ENCODE measurements at regions of chr20 and their contacts with region 1.

Region 1: GRCh38 chr20:41411391-41411847 is 44.8 kb upstream of the EMILIN3 start:
- DNase-seq: no peak
- ATAC-seq: peak; percentile 56 to 76

Region 2: DNA sequence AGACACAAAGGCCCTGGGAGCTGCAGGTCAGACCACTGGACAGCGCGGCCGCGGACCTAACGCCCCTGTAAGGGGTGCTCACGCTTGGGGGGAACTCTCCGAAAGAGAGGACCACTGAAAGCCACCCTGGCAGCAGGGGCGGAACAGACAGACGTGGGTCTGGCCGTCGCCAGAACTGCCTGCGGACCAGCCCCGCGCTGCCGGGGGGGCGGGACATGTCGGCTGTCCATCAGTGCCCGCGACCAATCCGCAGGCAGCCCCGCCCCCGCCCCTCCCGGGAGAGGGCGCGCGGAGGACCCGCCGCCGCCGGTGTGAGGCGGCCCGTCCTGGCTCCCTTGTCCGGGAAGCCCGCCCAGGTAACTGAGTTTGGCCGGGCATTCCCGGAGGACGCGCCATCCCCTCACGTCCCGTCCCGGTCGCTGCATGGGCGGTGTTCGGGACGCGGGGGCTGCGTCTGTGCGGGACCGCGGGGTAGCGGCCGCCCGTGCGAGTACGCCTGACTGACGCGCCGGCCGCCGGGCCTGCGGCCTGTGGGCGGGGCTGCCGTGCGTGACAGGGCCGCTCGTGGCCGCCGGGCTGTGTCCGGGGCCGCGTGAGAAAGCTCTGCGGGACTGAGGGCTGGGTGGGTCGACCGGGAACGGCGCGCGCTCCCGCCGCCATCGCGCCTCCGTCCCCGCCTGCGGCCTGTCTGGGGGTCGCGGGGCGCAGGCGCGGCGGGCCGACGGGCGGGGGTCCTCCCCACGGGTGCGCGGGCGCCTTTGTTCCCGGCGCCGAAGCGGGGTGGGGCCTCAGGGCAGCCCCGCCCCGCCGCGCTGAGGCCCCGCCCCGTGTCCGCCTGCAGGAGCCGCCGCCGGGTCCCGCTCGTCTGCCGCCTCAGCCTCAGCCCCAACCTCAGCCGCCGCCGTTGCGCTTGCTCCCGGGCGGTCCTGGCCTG is 274.5 kb before region 1 on chr20 and contains the start of gene PLCG1:
- intact Hi-C with region 1: loop called in 1 of 2 experiments (anchors 10 kb)
- DNase-seq: peak; percentile 93
- ATAC-seq: peak; percentile 88 to 90
- total RNA-seq, gene PLCG1: 40.0 to 64.8 TPM

Region 3: DNA sequence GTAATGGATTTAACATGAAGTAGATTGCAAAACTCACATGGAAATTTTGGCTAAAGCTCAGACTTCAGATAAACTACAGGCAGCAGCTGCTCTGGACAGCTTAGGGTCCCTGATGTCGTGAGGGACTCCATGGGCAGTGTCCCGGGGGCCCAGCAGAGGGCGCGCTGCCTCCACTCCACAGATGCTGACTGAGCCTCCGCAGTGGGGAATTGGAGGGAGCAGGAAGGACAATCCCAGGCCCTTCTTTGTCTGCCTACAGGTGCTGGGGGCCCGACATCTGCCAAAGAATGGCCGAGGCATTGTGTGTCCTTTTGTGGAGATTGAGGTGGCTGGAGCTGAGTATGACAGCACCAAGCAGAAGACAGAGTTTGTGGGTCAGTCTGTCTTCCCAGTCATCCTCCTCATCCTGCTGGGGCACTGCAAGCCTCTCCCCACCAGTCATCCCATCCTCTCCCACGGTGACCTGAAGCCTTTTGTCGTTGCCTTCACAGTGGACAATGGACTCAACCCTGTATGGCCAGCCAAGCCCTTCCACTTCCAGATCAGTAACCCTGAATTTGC is 238.2 kb before region 1 on chr20:
- intact Hi-C with region 1: loop called in 1 of 2 experiments (anchors 10 kb)
- DNase-seq: peak; percentile 88
- ATAC-seq: peak; percentile 84 to 92

Region 4: DNA sequence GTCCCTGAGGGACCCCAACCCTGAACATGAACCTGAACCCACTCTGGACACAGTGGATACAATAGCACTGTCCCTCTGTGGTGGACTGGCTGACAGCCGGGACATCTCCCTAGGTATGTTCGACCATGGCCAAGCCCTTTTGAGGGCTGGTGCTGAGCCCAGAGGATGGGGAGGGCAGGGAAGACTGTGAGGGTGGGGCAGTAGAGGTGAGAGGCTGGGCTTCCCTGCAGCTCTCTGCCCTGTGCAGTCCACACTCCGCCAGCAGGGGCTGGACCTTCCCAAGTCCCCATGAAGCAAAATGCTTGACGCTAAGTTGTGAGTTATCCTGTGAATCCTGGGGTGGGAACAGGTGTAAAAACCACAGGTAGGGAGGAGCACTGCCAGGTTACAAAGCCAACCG is 59.3 kb before region 1 on chr20:
- intact Hi-C with region 1: loop called in 1 of 2 experiments (anchors 5 kb)
- DNase-seq: no peak
- ATAC-seq: no peak

Region 5: DNA sequence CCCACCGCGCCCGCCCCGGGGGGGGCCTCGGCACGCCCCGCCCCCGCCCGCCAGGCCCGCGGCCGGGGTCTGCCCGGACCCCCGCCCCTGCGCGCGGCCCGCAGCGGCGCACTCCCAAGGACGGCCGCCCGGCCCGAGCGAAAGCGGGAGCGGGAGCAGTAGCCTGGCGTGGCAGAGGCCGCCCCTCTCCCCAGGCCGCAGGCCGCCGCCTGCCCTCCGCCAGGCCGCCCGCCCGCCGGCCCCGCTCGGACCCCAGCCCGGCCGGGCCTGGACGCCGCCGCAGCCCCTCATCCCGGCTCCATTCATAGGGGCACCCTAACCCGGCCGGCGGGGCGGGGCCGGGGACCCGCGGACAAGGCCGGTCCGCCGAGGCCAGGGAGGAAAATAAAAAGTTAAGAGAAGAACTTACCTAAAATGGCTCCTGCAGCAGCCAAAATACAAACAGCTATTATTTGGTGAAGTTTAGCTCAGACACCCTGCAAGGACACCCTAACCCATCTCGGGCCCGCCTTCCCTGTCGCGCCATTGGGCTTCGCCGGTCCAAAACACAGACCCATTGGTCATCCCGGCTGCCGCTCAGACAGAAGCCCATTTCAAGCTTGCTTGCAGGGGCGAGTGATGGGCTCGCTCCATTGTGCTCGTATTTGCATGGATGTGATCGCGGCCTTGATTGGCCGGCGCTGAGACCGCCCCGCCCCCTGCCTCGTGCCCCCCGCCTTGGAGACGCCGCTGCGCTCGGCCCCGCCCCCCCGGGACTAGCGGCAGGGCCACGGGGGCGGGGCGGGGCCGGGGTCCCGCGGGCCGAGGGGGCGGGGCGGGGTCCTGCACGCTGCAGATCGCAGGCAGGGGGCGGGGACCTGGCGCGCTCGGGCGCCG is 206.8 kb after region 1 on chr20 and contains the start of gene CHD6:
- intact Hi-C with region 1: no loop called
- DNase-seq: peak; percentile 100
- ATAC-seq: peak; percentile 99
- total RNA-seq, gene CHD6: 35.6 to 36.5 TPM

Measured in left cardiac atrium (tissue), 4 donors.